Activated naive CD4-positive, alpha-beta T cell treated with anti-CD3 and anti-CD28 coated beads for 36 hours (primary cell): ENCODE measurements at regions of chr19 and their contacts with region 1.

Region 1: DNA sequence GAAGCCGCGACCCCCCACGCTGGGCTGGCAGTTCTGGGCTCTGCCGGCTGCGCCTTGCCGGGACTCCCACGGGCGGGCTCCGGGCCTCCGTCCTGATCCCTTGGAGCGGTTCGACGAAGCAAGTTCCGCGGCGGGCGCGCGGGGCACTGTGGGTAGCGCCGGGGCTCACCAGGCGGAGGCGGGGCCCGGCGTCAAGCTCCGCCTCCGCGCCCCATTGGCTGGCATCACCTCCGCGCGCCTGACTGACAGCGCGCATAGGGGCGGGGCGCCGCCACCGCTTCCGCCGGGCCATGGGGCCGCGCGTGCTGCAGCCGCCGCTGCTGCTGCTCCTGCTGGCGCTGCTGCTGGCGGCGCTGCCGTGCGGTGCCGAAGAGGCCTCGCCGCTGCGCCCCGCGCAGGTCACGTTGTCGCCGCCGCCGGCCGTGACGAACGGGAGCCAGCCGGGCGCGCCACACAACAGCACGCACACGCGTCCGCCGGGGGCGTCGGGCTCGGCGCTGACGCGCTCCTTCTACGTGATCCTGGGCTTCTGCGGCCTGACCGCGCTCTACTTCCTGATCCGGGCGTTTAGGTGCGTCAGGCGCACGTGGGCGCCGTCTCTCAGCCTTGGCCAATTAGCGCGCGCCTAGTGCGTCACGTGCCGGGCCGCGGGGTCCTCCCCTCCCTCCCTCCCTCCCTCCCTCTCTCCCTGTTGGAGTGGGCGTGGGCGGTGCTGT is at the start of gene FAM174C:
- DNase-seq: peak; percentile 96
- H3K4me3 Mint-ChIP-seq: peak within 1 kb of the TSS; percentile 87
- H3K27ac Mint-ChIP-seq: peak within 1 kb of the TSS; percentile 94
- H3K4me1 Mint-ChIP-seq: peaks cover 55% of the 10 kb centered on the region
- H3K27me3 Mint-ChIP-seq: no peaks in the 10 kb centered on the region
- total RNA-seq, gene FAM174C: 62.8 to 65.3 TPM

Region 2: DNA sequence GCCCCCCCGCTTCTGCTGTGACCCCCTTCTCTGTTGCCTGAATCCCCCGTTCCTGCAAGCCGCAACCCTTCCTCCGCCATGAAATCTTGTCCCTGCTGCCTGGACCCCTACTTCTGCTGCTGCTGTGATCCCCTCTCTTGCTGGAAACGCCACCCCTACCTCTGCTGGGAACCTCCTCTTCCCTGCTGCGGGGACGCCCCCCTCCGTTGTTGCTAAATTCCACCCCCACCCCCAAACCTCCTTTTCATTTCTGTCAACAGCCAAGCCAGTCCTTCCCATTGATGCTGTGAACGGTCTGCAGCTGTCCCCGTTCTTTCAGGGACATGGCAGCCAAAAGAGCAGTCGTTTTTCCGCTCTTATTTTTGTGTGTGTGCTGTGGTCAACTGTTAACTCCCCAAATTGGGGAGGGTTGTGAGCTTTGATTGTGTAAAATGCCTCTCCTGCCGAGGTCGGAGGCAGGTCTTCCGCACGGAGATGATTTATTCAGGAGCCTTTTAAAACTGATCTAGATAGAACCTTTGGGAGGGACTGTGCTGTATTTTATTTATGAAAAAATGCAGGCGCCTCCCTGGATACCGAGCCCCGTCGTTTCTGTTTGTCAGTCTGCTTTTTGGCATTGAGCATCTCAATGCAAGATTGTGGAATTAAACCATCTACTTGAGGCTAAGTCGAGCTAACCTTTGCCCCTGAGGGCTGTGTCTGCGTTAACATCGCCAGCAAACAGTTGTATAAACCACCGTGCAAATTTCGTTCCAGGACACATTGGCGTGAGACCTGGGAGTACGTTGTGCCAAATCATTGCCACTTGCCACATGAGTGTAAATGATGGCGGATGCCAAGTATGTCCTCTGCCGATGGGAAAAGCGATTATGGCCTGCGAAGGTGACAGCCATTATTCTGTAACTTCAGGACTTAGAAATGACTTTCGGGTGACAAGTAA is 80.4 kb after region 1 on chr19:
- CTCF ChIA-PET with region 1: no interaction called
- intact Hi-C with region 1: loop called (anchors 5 kb)
- DNase-seq: peak; percentile 41
- H3K4me3 Mint-ChIP-seq: peak overlapping the region; percentile 83
- H3K27ac Mint-ChIP-seq: peak overlapping the region; percentile 59
- H3K4me1 Mint-ChIP-seq: peaks cover 15% of the 10 kb centered on the region
- H3K27me3 Mint-ChIP-seq: no peaks in the 10 kb centered on the region

Region 3: DNA sequence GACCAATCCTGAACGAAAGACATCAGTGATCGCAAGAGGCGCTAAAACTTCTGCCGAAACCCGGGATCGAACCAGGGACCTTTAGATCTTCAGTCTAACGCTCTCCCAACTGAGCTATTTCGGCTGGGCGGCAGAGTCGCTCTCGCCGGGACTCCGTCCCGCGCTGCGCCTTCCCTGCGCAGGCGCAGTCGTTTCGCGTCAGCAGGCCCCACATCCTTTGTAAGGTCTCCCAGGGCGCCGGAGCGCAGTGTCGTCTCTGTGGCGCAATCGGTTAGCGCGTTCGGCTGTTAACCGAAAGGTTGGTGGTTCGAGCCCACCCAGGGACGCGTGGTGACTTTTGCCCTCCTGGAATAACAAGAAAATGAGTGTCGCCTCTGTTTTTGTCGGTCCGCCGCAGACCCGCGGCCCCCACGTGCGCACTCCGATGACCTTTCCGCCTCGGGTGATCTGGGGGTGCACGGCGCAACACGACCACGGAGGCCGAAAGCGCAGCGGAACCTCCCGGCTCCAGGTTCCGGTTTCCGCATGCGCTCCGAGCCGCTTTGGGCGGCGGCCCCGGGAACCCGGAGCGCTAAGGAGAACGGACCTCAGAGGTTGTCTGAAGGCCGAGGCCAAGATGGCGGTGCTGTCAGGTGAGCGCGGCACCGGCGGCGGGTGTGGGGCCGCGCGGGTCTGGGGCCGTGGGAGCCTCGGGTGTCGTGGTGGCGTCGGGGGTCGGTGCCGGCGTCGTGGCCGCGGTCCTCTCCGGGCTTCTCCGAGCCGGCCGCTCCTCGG is 108.1 kb after region 1 on chr19 and contains the start of gene NDUFS7:
- CTCF ChIA-PET with region 1: no interaction called
- intact Hi-C with region 1: loop called (anchors 1 kb)
- DNase-seq: peak; percentile 93
- H3K4me3 Mint-ChIP-seq: peak within 1 kb of the TSS; percentile 84
- H3K27ac Mint-ChIP-seq: peak within 1 kb of the TSS; percentile 98
- H3K4me1 Mint-ChIP-seq: peaks cover 26% of the 10 kb centered on the region
- H3K27me3 Mint-ChIP-seq: peaks cover 3% of the 10 kb centered on the region
- total RNA-seq, gene NDUFS7: 138 to 148 TPM

Region 4: GRCh38 chr19:1438035-1438932 is 162.9 kb after region 1 on chr19 and contains the start of gene RPS15:
- CTCF ChIA-PET with region 1: no interaction called
- intact Hi-C with region 1: loop called (anchors 1 kb)
- DNase-seq: peak; percentile 96
- H3K4me3 Mint-ChIP-seq: peak within 1 kb of the TSS; percentile 98
- H3K27ac Mint-ChIP-seq: peak within 1 kb of the TSS; percentile 99
- H3K4me1 Mint-ChIP-seq: peaks cover 40% of the 10 kb centered on the region
- H3K27me3 Mint-ChIP-seq: no peaks in the 10 kb centered on the region
- total RNA-seq, gene RPS15: 1,902 to 1,906 TPM

Region 5: DNA sequence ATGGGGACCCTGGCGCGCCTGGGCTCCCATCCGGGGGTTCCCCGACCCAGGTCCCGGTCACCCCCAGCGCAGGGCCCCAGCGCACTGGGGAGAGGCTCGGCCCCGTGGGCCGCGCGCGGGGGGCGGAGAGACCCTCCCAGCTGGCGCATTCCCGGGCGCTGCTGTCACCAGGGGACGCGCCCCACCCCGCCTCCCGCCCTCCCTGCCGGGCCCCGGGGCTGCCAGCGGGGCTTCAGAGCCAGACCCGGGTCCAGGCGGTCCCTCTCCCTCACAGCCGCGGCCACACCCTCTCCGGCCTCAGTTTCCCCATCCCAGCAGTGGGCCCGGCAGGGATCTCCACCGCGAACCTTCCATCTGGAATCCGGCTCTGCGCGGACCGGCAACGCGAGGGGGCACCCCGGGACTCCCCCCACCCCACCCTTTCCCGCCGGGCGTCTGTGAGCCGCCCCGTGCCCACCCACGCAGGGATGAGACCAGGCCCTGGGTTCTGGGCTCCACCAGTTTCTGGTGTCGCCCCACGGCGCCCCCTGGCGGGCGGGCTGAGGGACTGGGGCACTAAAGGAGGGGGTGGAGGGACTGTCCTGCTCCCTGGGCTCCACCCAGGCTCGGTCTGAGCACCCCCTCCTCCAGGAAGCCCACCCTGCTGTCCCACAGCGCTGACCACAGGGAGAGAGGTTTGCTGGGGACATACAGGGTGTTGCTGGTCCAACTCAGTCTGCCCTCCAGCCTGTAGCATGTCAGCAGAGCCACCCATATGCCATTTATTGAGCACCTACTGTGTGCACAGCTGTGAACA is 238.3 kb after region 1 on chr19:
- CTCF ChIA-PET with region 1: no interaction called
- intact Hi-C with region 1: loop called (anchors 5 kb)
- DNase-seq: peak; percentile 69
- H3K4me3 Mint-ChIP-seq: no peak overlapping the region
- H3K27ac Mint-ChIP-seq: no peak overlapping the region
- H3K4me1 Mint-ChIP-seq: peaks cover 12% of the 10 kb centered on the region
- H3K27me3 Mint-ChIP-seq: peaks cover 6% of the 10 kb centered on the region